ENCODE measurements at regions of chr5 and their contacts with region 1.

Region 1: DNA sequence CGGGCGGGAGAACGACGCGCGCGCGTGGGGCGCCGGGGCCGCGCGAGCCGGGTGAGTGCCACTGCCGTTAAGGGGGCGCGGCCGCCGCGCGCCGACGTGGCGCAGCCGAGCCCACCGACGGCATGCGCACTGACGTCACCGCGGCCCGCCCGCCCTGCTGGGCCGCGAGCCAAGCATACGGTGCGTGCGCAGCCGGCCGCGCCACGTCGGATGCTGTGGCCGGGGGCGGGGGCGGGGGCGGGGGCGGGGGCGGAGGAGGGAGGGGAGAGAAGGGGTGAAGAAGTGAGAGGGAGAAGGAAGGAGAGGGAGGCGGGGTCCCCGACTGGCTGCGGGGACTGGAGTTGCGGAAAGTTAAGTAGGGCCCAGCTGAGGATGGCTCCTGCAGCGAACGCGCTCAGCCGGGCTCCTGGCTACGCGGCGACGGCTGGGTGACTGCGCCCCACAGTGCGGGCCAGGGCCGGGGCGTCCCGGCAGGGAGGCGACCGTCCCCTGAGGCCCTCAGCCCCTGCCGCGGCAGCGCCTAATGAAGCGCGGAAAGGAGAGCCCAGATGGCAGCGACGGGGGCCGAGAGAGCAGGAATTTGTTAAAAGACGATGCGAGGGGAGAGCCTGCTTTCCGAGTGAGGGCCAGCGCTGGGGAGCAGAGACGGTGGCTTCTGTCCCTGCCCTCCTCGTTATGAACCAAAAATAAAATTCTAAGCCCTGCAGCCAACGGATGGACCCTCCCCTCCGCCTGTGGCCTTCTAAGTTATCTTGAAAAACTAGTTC is at the start of gene DAP:
- DNase-seq: peak; percentile 89
- H3K4me3 Mint-ChIP-seq: peak within 1 kb of the TSS; percentile 97
- H3K27ac Mint-ChIP-seq: peak within 1 kb of the TSS; percentile 99
- H3K4me1 Mint-ChIP-seq: peaks cover 21% of the 10 kb centered on the region
- H3K27me3 Mint-ChIP-seq: peaks cover 13% of the 10 kb centered on the region
- CTCF ChIP-seq: no peak
- total RNA-seq, gene DAP: 138 and 141 TPM in 2 replicates

Region 2: DNA sequence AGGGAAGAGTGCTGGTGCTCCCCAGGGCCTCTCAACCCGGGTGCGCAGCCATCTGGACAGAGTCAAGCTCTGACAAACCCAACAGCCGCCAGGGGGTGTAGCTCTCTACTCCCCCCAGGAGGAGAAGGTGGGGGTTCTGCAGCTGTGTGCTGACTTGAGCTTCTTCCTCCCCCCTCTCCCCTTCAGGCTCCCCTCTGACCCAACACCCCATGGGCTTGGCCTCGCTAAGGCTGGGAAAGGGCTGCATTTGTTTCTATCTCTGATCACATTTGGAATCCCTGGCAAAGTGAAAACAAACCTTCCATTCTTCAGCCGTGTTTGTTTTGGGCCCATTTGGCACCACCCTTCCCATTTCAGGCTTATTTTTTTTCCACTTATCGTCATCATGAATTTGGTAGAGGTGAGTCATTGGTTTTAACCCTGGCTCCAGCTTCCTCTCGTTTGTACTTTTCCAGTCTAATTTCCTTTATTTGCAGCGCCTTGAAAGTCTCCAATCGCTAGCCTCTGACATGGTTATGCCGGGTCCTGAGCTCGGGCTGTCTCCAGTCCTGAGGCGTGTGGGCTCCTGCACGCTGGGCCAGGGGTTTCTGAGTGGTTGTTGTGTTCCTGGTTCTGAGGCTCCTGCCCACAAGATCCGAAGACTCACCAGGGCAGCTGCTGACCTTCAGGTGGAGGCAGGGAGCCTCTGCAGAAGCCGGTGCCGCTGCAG is 36.4 kb before region 1 on chr5:
- CTCF ChIA-PET with region 1: interaction called, 5 read pairs
- intact Hi-C with region 1: loop called (anchors 2 kb)
- DNase-seq: peak; percentile 82
- H3K4me3 Mint-ChIP-seq: peak overlapping the region; percentile 65
- H3K27ac Mint-ChIP-seq: peak overlapping the region; percentile 97
- H3K4me1 Mint-ChIP-seq: peaks cover 64% of the 10 kb centered on the region
- H3K27me3 Mint-ChIP-seq: no peaks in the 10 kb centered on the region
- CTCF ChIP-seq: peak; percentile 77

Region 3: DNA sequence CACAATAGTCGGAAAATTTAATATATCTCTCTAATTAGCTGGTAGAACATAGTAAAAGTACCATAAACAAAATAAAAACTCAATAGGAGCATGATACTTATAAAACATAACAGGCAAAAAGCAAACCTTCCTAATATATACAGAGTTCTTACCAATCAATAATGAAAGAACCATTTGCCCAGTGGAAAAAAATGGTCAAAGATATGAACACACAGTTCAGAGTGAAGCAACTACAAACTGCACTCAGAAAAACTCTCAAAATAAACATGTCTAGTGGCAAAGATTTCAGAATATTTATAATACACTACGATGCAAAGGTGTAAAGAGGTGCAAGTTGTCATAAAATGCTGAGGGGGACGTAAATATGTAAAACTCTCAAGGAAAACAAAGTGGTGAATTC is 1719.1 kb after region 1 on chr5:
- CTCF ChIA-PET with region 1: no interaction called
- intact Hi-C with region 1: no loop called
- DNase-seq: no peak
- H3K4me3 Mint-ChIP-seq: no peak overlapping the region
- H3K27ac Mint-ChIP-seq: no peak overlapping the region
- H3K4me1 Mint-ChIP-seq: no peaks in the 10 kb centered on the region
- H3K27me3 Mint-ChIP-seq: no peaks in the 10 kb centered on the region
- CTCF ChIP-seq: no peak

Measured in Calu3 (cell line).